CD4-positive, alpha-beta T cell (primary cell): ENCODE measurements at regions of chr7 and their contacts with region 1.

Region 1: DNA sequence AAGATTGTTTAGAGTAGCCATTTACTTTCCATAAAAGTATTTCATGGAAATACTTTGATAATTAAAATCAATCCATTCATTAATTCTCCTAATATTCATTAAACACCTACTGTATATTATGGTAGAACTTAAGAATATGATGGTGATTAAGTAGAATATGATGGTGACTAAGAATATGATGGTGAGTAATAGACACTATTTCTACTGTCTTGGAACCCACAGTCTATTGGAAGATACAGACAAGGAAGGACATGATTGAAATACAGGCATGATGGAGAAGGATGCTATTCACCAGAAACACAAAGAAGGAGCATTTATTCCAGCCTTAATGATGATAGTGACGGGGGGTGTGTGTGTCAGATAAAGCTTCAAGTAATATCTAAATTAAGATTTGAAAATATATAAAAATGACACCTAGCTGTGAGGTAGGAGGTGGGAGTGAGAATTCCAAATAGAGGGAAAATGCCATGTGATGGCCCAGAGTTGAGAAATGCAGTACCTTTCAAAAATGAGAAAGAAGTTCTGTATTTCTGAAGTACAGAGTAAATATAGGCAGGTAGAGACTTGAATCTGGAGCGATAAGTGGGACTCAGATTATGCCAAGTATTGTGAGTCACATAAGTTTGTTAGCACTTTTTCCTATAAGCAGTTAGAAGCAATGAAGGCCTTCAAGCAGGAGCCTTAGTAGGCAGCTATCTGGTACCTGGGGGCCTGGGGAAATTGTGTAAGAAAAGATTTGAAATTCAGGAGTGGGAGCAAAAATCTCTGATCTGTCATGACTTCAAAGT is 12.5 kb upstream of the CDK13 start:
- DNase-seq: no peak
- ATAC-seq: no peak
- H3K4me3 ChIP-seq: no peak overlapping the region
- H3K4me3 Mint-ChIP-seq: no peak overlapping the region
- H3K27ac ChIP-seq: no peak overlapping the region
- H3K27ac Mint-ChIP-seq: no peak overlapping the region
- H3K4me1 ChIP-seq: no peaks in the 10 kb centered on the region
- H3K4me1 Mint-ChIP-seq: no peaks in the 10 kb centered on the region
- H3K27me3 ChIP-seq: no peaks in the 10 kb centered on the region
- H3K27me3 Mint-ChIP-seq: peaks cover 3% of the 10 kb centered on the region
- CTCF ChIP-seq: no peak

Region 2: GRCh38 chr7:39971924-39972323 is 34.4 kb after region 1 on chr7:
- CTCF ChIA-PET with region 1: no interaction called
- POLR2A ChIA-PET with region 1: no interaction called
- intact Hi-C with region 1: loop called in 1 of 2 experiments (anchors 1 kb)
- DNase-seq: no peak
- ATAC-seq: no peak
- H3K4me3 ChIP-seq: no peak overlapping the region
- H3K4me3 Mint-ChIP-seq: peak overlapping the region; percentile 23
- H3K27ac ChIP-seq: no peak overlapping the region
- H3K27ac Mint-ChIP-seq: peak overlapping the region; percentile 26
- H3K4me1 ChIP-seq: peaks cover 43% of the 10 kb centered on the region
- H3K4me1 Mint-ChIP-seq: peaks cover 75% of the 10 kb centered on the region
- H3K27me3 ChIP-seq: no peaks in the 10 kb centered on the region
- H3K27me3 Mint-ChIP-seq: no peaks in the 10 kb centered on the region
- CTCF ChIP-seq: no peak

Region 3: GRCh38 chr7:40019558-40019957 is 82.0 kb after region 1 on chr7:
- CTCF ChIA-PET with region 1: no interaction called
- POLR2A ChIA-PET with region 1: no interaction called
- intact Hi-C with region 1: no loop called
- DNase-seq: no peak
- ATAC-seq: no peak
- H3K4me3 ChIP-seq: no peak overlapping the region
- H3K4me3 Mint-ChIP-seq: no peak overlapping the region
- H3K27ac ChIP-seq: no peak overlapping the region
- H3K27ac Mint-ChIP-seq: no peak overlapping the region
- H3K4me1 ChIP-seq: no peaks in the 10 kb centered on the region
- H3K4me1 Mint-ChIP-seq: peaks cover 38% of the 10 kb centered on the region
- H3K27me3 ChIP-seq: no peaks in the 10 kb centered on the region
- H3K27me3 Mint-ChIP-seq: no peaks in the 10 kb centered on the region
- CTCF ChIP-seq: no peak